Heart left ventricle (tissue), 16 donors: ENCODE measurements at regions of chr1 and their contacts with region 1.

Region 1: DNA sequence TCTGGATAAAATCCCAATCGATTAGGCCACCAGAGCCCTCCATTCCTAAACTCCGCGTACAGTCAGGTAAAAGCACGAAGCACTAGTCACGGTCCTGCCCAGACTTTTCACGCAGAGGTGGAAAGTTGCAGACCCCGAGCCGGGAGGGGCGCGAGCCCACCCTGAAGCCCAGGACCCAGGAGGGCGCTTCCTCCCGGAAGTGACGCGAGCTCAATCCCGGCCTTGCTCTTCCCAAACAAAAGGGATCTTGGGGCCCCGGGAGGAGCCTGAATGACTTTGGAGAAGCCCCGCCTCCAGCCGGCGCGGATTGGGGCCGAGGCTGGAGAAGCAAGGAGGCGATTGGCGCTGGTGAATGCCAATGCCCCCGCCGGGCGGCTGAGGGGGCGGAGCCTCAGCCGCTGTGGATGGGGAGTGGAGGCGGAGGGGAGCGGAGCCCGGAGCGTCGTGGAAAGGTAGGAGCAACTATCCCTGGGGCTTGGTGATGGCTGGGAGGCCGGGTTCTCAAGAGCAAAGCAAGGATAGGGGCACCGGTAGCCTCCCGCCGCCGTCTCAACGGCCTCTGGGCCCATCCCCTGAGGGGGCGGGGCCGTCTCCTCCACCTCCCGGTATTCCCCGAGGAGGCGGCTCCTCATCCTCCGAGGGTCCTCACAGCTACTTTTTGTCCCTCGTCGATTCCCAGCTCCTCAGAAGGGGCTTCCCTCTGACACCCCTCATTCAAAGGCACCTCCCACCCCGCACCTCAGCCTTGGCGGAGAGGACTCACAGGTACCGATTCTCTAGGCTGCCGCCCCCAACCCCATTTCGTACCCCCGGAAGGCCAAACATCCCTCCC is at the start of gene CTTNBP2NL:
- DNase-seq: peak; percentile 97 to 99 (median 98)
- ATAC-seq: peak; percentile 91 to 97 (median 94)
- H3K4me3 ChIP-seq: peak within 1 kb of the TSS; percentile 61 to 99 (median 88)
- H3K27ac ChIP-seq: peak within 1 kb of the TSS; percentile 90 to 98 (median 96)
- H3K4me1 ChIP-seq: peaks cover 0 to 82% (median 45%) of the 10 kb centered on the region in 12 donors
- H3K27me3 ChIP-seq: no peaks in the 10 kb centered on the region
- CTCF ChIP-seq: no peak
- POLR2A ChIP-seq: peak in 1 of 2 donors; percentile 82
- total RNA-seq, gene CTTNBP2NL: 9.3 to 22.8 (median 14.7) TPM

Region 2: DNA sequence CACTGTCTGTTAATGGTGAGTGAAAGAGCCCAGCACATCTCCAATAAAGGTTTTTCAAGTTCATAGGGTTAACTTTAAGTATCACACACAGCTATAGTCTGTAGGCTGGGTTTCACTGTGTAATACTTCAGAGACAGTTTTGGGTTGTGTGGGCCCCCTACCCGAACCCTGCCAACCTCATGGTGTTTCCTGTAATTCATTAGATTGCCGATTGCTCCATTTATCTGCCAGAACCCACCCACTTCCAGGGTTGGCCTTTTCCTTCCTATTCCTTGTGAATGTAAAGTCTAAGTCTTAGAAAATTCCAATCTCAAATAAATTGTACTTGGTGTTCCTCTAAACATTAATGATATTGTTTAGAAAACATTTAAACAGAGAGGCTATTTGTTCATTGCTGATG is 43.6 kb after region 1 on chr1:
- intact Hi-C with region 1: loop called in 3 of 10 experiments (anchors 2 to 5 kb)
- DNase-seq: peak in 3 of 5 donors; percentile 20 to 29 (median 28)
- ATAC-seq: peak; percentile 19 to 75 (median 66)
- H3K4me3 ChIP-seq: no peak overlapping the region
- H3K27ac ChIP-seq: peak overlapping the region; percentile 56 to 75 (median 66)
- H3K4me1 ChIP-seq: peaks cover 0 to 58% (median 38%) of the 10 kb centered on the region in 12 donors
- H3K27me3 ChIP-seq: no peaks in the 10 kb centered on the region
- CTCF ChIP-seq: no peak
- POLR2A ChIP-seq: peak in 1 of 2 donors; percentile 28

Region 3: GRCh38 chr1:112619520-112620376 is 223.7 kb after region 1 on chr1 and contains the start of gene CAPZA1:
- intact Hi-C with region 1: loop called (anchors 2 to 10 kb)
- DNase-seq: peak; percentile 93 to 95 (median 94)
- ATAC-seq: peak; percentile 97 to 99 (median 98)
- H3K4me3 ChIP-seq: peak within 1 kb of the TSS; percentile 71 to 99 (median 89)
- H3K27ac ChIP-seq: peak within 1 kb of the TSS; percentile 92 to 100 (median 98)
- H3K4me1 ChIP-seq: peaks cover 0 to 59% (median 46%) of the 10 kb centered on the region in 12 donors
- H3K27me3 ChIP-seq: no peaks in the 10 kb centered on the region
- CTCF ChIP-seq: no peak
- POLR2A ChIP-seq: peak in 1 of 2 donors; percentile 74
- total RNA-seq, gene CAPZA1: 23.8 to 98.4 (median 32.6) TPM

Region 4: DNA sequence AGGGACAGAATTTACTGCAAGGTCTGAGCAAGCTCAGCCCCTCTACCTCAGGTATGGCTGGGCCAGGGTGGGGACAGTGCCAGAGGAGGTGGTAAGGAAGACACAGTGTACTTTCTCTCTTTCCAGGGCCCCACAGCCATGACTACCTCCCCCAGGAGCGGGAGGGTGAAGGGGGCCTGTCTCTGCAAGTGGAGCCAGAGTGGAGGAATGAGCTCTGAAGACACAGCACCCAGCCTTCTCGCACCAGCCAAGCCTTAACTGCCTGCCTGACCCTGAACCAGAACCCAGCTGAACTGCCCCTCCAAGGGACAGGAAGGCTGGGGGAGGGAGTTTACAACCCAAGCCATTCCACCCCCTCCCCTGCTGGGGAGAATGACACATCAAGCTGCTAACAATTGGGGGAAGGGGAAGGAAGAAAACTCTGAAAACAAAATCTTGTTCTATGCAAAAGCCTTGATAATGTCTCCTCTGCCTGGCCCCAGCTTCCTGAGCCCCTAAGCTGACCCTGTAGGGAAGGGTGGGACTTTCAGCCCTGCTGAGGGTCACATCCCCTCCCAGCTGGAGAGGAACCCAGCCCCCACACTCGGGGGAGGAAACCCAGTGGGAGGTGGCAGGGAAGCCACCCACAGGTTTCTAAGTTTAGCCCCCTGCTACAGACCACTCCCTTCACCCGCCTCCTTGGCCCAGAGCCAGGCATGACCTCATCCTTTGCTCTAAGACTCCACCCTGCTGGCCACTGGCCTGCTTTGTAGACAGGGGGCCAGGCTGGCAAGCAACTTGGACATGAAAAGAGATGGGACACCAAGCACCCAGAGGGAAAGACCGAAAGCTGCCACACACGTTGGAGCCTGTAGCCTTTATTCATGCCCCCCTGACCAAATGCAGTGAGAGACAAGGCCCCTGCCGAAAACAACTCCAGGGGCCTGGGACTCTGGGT is 304.5 kb after region 1 on chr1:
- intact Hi-C with region 1: loop called in 7 of 10 experiments (anchors 2 to 5 kb)
- DNase-seq: peak; percentile 98 to 99 (median 99)
- ATAC-seq: peak; percentile 74 to 84 (median 79)
- H3K4me3 ChIP-seq: peak overlapping the region in 5 of 12 donors; percentile 1 to 28 (median 5)
- H3K27ac ChIP-seq: peak overlapping the region; percentile 67 to 100 (median 96)
- H3K4me1 ChIP-seq: peaks cover 17 to 88% (median 74%) of the 10 kb centered on the region in 12 donors
- H3K27me3 ChIP-seq: no peaks in the 10 kb centered on the region
- CTCF ChIP-seq: peak in 6 of 12 donors; percentile 15 to 45 (median 26)
- POLR2A ChIP-seq: peak in 1 of 2 donors; percentile 20

Region 5: DNA sequence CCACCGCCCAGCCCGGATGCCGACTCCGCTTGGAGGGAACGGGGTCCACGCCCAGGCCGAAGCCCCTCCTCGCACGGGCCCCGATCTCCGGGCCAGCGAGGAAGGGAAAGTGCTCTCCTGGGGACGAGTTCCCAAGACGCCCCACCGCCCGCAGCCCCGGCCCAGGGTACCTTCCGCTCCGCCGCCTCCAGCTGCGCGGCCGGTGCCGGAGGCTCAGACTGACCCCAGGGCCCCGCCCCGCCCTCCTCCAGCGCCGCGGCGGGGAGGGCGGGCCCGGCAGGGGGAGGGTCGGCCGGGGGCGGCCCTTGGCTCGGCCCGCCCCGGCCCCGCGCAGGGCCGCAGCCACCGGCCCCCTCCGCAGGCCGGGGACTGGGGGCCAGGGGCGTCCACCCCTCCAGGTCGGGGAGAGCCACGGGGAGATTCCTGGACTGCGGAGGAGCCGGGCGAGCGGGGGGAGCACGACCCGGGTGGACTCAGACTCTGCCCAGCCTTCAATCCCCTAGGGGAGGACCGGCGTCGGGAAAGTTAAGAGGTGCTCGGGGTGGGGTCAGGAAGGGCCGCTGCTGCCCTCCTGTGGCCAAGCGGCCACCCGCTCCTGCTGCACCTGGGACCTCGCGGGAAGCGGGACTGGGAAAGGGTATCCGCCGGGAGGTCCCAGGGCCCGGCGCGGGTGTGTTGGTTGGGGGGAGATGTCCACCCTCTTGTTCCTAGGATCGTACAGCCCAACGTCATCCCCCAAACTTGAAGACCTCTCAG is 311.0 kb after region 1 on chr1 and contains the start of gene RHOC:
- intact Hi-C with region 1: loop called (anchors 2 to 5 kb)
- DNase-seq: peak; percentile 90 to 93 (median 92)
- ATAC-seq: peak; percentile 56 to 87 (median 74)
- H3K4me3 ChIP-seq: peak within 1 kb of the TSS; percentile 75 to 100 (median 98)
- H3K27ac ChIP-seq: peak within 1 kb of the TSS; percentile 92 to 100 (median 99)
- H3K4me1 ChIP-seq: peaks cover 3 to 49% (median 39%) of the 10 kb centered on the region in 12 donors
- H3K27me3 ChIP-seq: no peaks in the 10 kb centered on the region
- CTCF ChIP-seq: peak; percentile 83 to 97 (median 94)
- POLR2A ChIP-seq: peak; percentile 64 to 95
- total RNA-seq, gene RHOC: 147 to 432 (median 217) TPM